Left ventricle myocardium inferior (tissue), 1 donor: ENCODE measurements at regions of chr1 and their contacts with region 1.

Region 1: DNA sequence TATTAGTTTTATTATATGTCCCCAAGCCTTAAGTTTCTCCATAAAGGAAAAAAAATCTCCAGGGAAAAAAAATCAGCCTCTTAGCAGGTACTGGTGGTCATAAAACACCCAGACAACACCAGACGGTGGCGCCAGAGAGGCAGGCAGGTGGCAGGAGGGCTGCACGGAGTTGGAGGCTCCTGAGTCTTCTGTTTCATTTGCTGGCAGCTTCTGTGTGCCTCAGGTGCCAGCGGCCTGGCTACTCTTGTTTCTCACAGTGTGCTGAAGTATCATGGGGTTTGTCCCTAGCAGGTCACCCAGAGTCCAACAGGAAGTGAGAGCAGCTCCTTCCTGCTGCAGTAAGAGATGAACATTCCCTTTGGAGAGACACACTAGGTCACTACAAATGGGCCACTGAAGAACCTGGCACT is 123.3 kb upstream of the GADD45A start:
- DNase-seq: peak; percentile 92
- H3K4me3 ChIP-seq: peak overlapping the region; percentile 39
- H3K27ac ChIP-seq: peak overlapping the region; percentile 78
- H3K4me1 ChIP-seq: peaks cover 34% of the 10 kb centered on the region
- H3K27me3 ChIP-seq: no peaks in the 10 kb centered on the region
- CTCF ChIP-seq: peak; percentile 92

Region 2: GRCh38 chr1:67685067-67685557 is 123.4 kb after region 1 on chr1 and contains the start of gene GADD45A:
- intact Hi-C with region 1: loop called (anchors 10 kb)
- DNase-seq: peak; percentile 98
- H3K4me3 ChIP-seq: peak within 1 kb of the TSS; percentile 97
- H3K27ac ChIP-seq: peak within 1 kb of the TSS; percentile 99
- H3K4me1 ChIP-seq: peaks cover 63% of the 10 kb centered on the region
- H3K27me3 ChIP-seq: no peaks in the 10 kb centered on the region
- CTCF ChIP-seq: no peak
- total RNA-seq, gene GADD45A: 65.0 TPM

Region 3: DNA sequence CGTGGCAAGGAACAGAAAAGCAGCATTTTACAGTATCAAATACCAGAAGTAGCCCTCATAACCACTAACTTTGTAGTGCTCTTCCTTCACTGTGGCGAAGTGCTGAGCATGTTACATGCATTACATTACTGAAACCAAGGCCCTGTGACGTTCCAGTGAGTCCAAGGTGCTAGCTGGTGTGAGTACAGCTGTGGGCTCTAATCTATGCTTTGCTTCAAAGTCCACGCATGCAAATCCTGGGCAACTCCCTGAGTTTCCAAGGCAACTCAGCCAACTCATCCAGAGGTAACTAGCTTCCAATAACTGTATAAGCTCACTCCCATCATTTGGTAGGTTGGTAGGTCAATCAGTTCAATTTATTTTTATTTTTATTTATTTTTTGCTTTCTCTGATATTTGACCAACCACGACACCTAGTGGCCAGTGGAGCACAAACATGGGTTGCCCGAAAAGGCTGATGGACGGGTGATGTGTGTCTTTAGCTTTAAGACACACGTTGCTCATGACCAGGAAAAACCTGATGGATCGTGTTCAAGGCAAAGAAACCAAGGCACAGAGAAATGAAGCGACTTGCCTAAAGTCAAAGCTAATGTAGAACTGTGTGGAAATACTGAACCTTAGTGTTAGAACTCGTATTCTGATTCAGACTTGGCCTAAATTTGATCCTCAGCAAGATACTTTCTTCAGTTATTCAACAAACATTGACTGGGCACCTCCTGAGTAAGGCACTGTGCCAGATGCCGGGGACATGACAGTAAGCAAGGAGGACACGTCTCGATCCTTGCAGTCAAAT is 198.5 kb after region 1 on chr1:
- intact Hi-C with region 1: loop called (anchors 5 kb)
- DNase-seq: peak; percentile 31
- H3K4me3 ChIP-seq: no peak overlapping the region
- H3K27ac ChIP-seq: peak overlapping the region; percentile 46
- H3K4me1 ChIP-seq: peaks cover 40% of the 10 kb centered on the region
- H3K27me3 ChIP-seq: no peaks in the 10 kb centered on the region
- CTCF ChIP-seq: peak; percentile 91